B cell (primary cell): ENCODE measurements at regions of chr21 and their contacts with region 1.

Region 1: DNA sequence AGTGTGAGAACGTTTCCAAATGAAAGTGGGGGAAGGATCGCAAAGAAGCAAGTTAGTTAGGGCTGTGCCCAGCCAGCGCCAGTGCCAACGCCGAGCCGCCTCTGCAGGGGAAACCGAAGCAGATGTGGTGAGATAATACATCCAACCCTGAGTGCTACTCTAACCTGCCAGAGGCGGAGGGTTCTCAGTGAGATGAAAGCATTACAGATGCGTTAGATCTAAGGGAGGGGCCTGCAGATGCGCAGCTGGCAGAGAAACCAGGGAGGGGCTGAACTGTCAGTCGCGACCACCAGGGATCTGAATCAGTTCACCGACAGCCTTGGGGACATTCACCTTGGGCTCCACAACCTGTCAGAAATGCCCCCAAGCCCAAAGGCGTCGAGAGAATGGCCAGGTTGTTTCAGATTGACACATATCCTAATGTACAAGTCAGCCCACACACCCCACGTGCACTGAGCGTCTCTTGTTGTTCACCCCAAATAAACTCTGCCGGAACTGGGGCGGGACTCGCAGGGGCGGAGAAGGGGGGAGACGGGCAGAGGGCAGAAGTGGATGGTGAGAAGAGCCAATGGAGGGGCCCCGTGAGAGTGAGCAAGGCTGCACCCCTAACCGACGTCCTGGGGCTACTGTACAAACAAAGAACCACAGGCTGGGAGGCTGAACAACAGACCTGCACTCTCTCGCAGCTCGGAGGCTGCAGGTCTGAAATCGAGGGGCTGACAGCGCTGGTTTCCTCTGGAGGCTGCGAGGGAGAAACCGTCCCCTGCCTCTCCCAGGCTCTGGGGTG is 8.7 kb upstream of the UMODL1 start:
- DNase-seq: peak; percentile 94
- ATAC-seq: peak; percentile 73
- H3K4me3 ChIP-seq: peak overlapping the region; percentile 3 to 79 (median 65)
- H3K4me3 Mint-ChIP-seq: peak overlapping the region; percentile 91
- H3K27ac ChIP-seq: peak overlapping the region; percentile 87 to 96
- H3K27ac Mint-ChIP-seq: peak overlapping the region; percentile 99
- H3K4me1 ChIP-seq: peaks cover 64 to 95% of the 10 kb centered on the region in 2 donors
- H3K4me1 Mint-ChIP-seq: peaks cover 82% of the 10 kb centered on the region
- H3K27me3 ChIP-seq: no peaks in the 10 kb centered on the region
- H3K27me3 Mint-ChIP-seq: no peaks in the 10 kb centered on the region
- CTCF ChIP-seq: no peak

Region 2: DNA sequence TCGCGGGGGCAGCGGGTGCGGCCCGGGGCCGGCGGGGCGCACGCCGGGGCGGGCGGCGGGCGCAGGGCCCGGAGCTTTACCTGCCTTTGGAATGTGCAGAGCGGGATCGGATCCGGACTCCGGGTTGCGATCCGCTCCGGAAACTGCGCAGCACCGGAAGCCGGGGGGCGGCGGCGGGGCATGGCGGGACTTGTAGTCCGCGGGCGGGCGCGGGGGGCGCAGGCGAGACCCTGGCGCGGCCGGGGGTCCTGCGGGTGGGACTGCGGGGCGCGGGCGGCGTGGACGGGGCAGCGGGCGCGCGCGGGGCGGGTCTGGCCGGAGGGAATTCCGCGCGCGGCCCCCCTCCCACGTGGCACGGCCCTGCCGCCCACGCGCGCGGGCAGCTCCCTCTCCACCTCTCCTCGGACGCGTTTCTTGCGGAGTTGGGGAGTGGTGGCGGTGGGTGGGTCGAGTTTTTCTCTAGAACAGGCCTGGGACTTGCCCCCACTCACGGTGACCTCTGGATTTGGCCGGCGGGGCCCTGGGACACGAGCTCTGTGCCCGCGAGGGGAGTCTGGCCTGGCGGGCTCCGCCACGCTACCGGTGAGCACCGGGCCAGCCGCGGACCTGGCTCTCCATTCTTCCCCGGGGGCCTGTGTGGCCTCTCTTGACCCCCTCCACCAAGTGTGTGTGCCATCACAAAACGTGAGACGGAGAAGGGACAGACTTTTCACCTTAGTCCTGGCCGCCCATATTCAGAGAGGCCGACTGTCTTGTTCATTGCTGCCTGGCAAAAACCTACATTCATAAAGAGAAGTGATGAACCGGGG is 183.0 kb before region 1 on chr21 and contains the start of gene PRDM15:
- CTCF ChIA-PET with region 1: no interaction called
- POLR2A ChIA-PET with region 1: interaction called, 4 read pairs
- intact Hi-C with region 1: loop called (anchors 1 kb)
- DNase-seq: peak; percentile 83
- ATAC-seq: peak; percentile 67
- H3K4me3 ChIP-seq: peak within 1 kb of the TSS; percentile 53 to 86 (median 81)
- H3K4me3 Mint-ChIP-seq: peak within 1 kb of the TSS; percentile 94
- H3K27ac ChIP-seq: peak within 1 kb of the TSS; percentile 76 to 80
- H3K27ac Mint-ChIP-seq: peak within 1 kb of the TSS; percentile 97
- H3K4me1 ChIP-seq: peaks cover 13 to 21% of the 10 kb centered on the region in 2 donors
- H3K4me1 Mint-ChIP-seq: peaks cover 35% of the 10 kb centered on the region
- H3K27me3 ChIP-seq: no peaks in the 10 kb centered on the region
- H3K27me3 Mint-ChIP-seq: no peaks in the 10 kb centered on the region
- CTCF ChIP-seq: no peak
- total RNA-seq, gene PRDM15: 20.7 and 21.3 TPM in 2 replicates

Region 3: GRCh38 chr21:41926117-41926806 is 136.2 kb before region 1 on chr21:
- CTCF ChIA-PET with region 1: interaction called, 3 read pairs
- POLR2A ChIA-PET with region 1: interaction called, 5 read pairs
- intact Hi-C with region 1: loop called (anchors 2 kb)
- DNase-seq: peak; percentile 76
- ATAC-seq: peak; percentile 70
- H3K4me3 ChIP-seq: peak overlapping the region; percentile 55 to 70 (median 62)
- H3K4me3 Mint-ChIP-seq: peak overlapping the region; percentile 94
- H3K27ac ChIP-seq: peak overlapping the region; percentile 82 to 87
- H3K27ac Mint-ChIP-seq: peak overlapping the region; percentile 98
- H3K4me1 ChIP-seq: peaks cover 71 to 85% of the 10 kb centered on the region in 2 donors
- H3K4me1 Mint-ChIP-seq: peaks cover 81% of the 10 kb centered on the region
- H3K27me3 ChIP-seq: no peaks in the 10 kb centered on the region
- H3K27me3 Mint-ChIP-seq: no peaks in the 10 kb centered on the region
- CTCF ChIP-seq: no peak

Region 4: DNA sequence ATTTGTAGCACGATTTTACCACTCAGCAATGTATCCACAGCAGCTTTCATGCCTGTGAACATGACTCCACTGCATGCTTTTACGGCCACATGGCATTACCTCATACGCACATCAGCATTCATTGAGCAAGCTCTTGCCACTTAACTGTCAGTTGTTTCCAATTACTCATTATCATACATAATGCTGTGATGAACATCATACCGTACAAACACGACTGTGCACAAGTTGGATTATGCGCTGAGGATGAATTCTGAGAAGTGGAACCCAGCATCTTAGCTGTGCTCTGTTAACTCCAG is 18.3 kb after region 1 on chr21:
- CTCF ChIA-PET with region 1: no interaction called
- POLR2A ChIA-PET with region 1: no interaction called
- intact Hi-C with region 1: no loop called
- DNase-seq: no peak
- ATAC-seq: no peak
- H3K4me3 ChIP-seq: no peak overlapping the region
- H3K4me3 Mint-ChIP-seq: no peak overlapping the region
- H3K27ac ChIP-seq: no peak overlapping the region
- H3K27ac Mint-ChIP-seq: no peak overlapping the region
- H3K4me1 ChIP-seq: peaks cover 15 to 26% of the 10 kb centered on the region in 2 donors
- H3K4me1 Mint-ChIP-seq: peaks cover 21% of the 10 kb centered on the region
- H3K27me3 ChIP-seq: no peaks in the 10 kb centered on the region
- H3K27me3 Mint-ChIP-seq: no peaks in the 10 kb centered on the region
- CTCF ChIP-seq: no peak

Region 5: GRCh38 chr21:42107881-42108553 is 45.6 kb after region 1 on chr21:
- CTCF ChIA-PET with region 1: interaction called, 22 read pairs
- POLR2A ChIA-PET with region 1: interaction called, 4 read pairs
- intact Hi-C with region 1: loop called (anchors 1 kb)
- DNase-seq: peak; percentile 85
- ATAC-seq: peak; percentile 86
- H3K4me3 ChIP-seq: peak overlapping the region in 4 of 5 experiments; percentile 5 to 50 (median 28)
- H3K4me3 Mint-ChIP-seq: peak overlapping the region; percentile 81
- H3K27ac ChIP-seq: peak overlapping the region; percentile 41 to 50
- H3K27ac Mint-ChIP-seq: peak overlapping the region; percentile 87
- H3K4me1 ChIP-seq: peaks cover 17 to 22% of the 10 kb centered on the region in 2 donors
- H3K4me1 Mint-ChIP-seq: peaks cover 38% of the 10 kb centered on the region
- H3K27me3 ChIP-seq: peaks cover 0 to 7% (median 0%) of the 10 kb centered on the region in 4 experiments
- H3K27me3 Mint-ChIP-seq: peaks cover 6% of the 10 kb centered on the region
- CTCF ChIP-seq: peak; percentile 70

Region 6: GRCh38 chr21:42414928-42415769 is 352.7 kb after region 1 on chr21:
- CTCF ChIA-PET with region 1: no interaction called
- POLR2A ChIA-PET with region 1: no interaction called
- intact Hi-C with region 1: no loop called
- DNase-seq: peak; percentile 87
- ATAC-seq: peak; percentile 86
- H3K4me3 ChIP-seq: peak overlapping the region in 2 of 5 experiments; percentile 25 to 27
- H3K4me3 Mint-ChIP-seq: peak overlapping the region; percentile 77
- H3K27ac ChIP-seq: no peak overlapping the region
- H3K27ac Mint-ChIP-seq: peak overlapping the region; percentile 91
- H3K4me1 ChIP-seq: peaks cover 6 to 16% of the 10 kb centered on the region in 2 donors
- H3K4me1 Mint-ChIP-seq: peaks cover 32% of the 10 kb centered on the region
- H3K27me3 ChIP-seq: peaks cover 0 to 3% (median 1%) of the 10 kb centered on the region in 4 experiments
- H3K27me3 Mint-ChIP-seq: peaks cover 11% of the 10 kb centered on the region
- CTCF ChIP-seq: no peak

Region 7: DNA sequence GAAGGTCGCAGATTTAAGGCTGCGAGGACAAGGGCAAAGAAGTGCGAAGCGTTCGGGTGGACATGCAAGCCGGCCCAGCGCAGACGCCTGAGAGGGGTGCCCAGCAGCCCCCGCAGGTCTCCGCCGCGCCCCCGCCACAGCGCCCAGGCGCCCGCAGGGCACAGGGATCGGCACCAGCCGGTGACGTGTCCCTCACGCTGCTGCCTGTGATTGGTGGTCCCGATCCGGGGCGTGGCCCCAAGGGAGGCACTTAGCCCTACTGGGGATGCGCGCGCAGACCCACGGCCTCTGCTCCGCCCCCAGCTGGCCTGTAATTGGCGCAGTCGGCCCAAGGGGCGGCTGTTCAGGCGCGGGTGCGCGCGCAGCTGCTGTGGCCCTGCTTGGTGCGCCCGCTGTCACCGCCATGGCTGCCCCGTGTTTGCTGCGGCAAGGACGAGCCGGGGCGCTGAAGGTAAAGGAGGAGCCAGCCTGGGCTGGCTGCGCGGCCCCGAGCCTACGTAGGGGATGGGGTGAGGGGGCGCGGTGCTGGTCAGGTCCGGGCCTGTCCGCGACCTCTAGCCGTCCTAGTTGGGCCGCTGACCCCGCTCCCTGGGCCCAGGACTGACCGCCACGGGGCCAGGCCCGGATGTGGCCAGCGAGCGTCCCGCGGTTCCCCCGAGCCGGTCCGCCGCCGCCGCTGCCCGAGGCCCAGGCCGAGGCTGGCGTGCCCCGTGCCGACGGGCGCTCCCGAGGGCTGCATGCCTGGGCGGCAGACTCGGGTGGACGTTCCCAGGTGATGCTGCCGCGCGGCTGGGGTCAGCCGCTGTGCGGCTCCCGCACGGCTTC is 830.7 kb after region 1 on chr21 and contains the start of gene NDUFV3:
- CTCF ChIA-PET with region 1: no interaction called
- POLR2A ChIA-PET with region 1: no interaction called
- intact Hi-C with region 1: loop called (anchors 5 kb)
- DNase-seq: peak; percentile 100
- ATAC-seq: peak; percentile 97
- H3K4me3 ChIP-seq: peak within 1 kb of the TSS; percentile 68 to 83 (median 70)
- H3K4me3 Mint-ChIP-seq: peak within 1 kb of the TSS; percentile 94
- H3K27ac ChIP-seq: peak within 1 kb of the TSS; percentile 80 to 96
- H3K27ac Mint-ChIP-seq: peak within 1 kb of the TSS; percentile 95
- H3K4me1 ChIP-seq: peaks cover 7 to 11% of the 10 kb centered on the region in 2 donors
- H3K4me1 Mint-ChIP-seq: peaks cover 10% of the 10 kb centered on the region
- H3K27me3 ChIP-seq: no peaks in the 10 kb centered on the region
- H3K27me3 Mint-ChIP-seq: no peaks in the 10 kb centered on the region
- CTCF ChIP-seq: no peak
- total RNA-seq, gene NDUFV3: 29.7 and 30.8 TPM in 2 replicates